ENCODE measurements at regions of chr2 and their contacts with region 1.

Region 1: GRCh38 chr2:68909793-68910674 is 38.8 kb upstream of the BMP10 start:
- DNase-seq: no peak
- H3K4me3 ChIP-seq: no peak overlapping the region
- CTCF ChIP-seq: peak; percentile 80

Region 2: DNA sequence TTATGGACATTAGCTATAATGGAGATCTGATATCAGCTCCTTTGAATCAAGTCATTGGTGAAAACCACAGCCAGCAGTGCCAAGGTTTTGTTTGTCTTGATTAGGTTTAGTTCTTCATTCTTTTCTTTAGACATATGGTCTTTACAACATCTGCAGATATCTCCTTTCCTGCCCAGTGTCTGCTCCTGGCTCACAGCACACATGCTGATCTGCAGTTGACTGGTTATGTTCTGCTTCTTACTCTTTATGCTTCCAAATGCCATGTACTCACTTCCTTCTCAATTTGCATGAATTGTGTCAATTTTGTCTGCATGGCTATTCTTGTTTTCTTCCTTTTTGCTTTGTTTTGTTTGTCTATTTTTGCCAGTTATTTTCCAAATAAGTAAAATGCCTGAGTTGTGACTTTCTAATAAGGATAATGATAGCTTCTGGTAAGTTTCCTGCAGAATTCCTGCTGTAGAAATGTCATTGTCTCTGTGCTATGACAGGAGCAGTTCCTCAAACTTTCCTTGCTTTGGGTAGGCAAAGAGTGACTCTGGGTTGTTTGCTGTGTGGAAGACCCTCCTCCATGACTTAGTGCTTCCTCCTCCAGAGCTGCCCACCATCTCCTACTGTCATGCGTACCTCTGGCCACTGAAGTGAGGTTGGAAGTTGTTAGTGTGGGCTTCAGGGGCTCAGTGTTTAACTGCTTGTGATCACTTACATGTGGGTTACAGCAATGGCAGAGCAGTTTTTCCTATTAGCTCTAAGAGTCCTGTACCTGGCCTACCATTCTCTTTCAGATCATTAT is 167.2 kb before region 1 on chr2:
- CTCF ChIA-PET with region 1: interaction called, 151 read pairs
- POLR2A ChIA-PET with region 1: no interaction called
- DNase-seq: no peak
- H3K4me3 ChIP-seq: no peak overlapping the region
- CTCF ChIP-seq: no peak